ENCODE measurements at regions of chr17 and their contacts with region 1.

Region 1: GRCh38 chr17:54172096-54172984 is 349.6 kb downstream of the KIF2B start:
- DNase-seq: peak; percentile 45
- H3K4me3 ChIP-seq: no peak overlapping the region
- H3K27ac ChIP-seq: no peak overlapping the region
- H3K4me1 ChIP-seq: no peaks in the 10 kb centered on the region
- H3K27me3 ChIP-seq: no peaks in the 10 kb centered on the region
- CTCF ChIP-seq: peak; percentile 65

Region 2: GRCh38 chr17:52389632-52390031 is 1782.7 kb before region 1 on chr17:
- CTCF ChIA-PET with region 1: no interaction called
- POLR2A ChIA-PET with region 1: no interaction called
- intact Hi-C with region 1: loop called (anchors 5 kb)
- DNase-seq: no peak
- H3K4me3 ChIP-seq: no peak overlapping the region
- H3K27ac ChIP-seq: no peak overlapping the region
- H3K4me1 ChIP-seq: no peaks in the 10 kb centered on the region
- H3K27me3 ChIP-seq: no peaks in the 10 kb centered on the region
- CTCF ChIP-seq: no peak

Region 3: DNA sequence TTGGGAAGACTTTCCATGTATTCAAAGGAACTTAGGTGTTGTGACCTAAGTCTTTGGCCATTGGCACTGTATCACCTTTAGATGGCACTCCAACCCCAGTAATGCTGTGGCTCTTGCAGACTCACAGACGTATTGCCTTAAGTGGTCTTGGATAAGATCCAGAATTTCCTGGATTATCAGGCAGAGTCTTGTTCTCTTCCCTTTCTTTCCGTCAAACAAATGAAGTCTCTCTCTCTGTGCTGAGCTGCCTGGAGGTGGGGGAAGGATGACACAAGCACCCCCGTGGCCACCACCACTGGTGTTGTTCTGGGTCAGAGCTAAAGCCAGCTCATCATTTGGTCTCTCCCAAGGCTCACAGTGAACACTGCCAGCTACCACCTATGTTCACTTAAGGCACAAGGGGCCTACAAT is 1139.5 kb before region 1 on chr17:
- CTCF ChIA-PET with region 1: no interaction called
- POLR2A ChIA-PET with region 1: no interaction called
- intact Hi-C with region 1: loop called (anchors 2 kb)
- DNase-seq: peak; percentile 86
- H3K4me3 ChIP-seq: no peak overlapping the region
- H3K27ac ChIP-seq: no peak overlapping the region
- H3K4me1 ChIP-seq: no peaks in the 10 kb centered on the region
- H3K27me3 ChIP-seq: no peaks in the 10 kb centered on the region
- CTCF ChIP-seq: peak; percentile 71

Region 4: DNA sequence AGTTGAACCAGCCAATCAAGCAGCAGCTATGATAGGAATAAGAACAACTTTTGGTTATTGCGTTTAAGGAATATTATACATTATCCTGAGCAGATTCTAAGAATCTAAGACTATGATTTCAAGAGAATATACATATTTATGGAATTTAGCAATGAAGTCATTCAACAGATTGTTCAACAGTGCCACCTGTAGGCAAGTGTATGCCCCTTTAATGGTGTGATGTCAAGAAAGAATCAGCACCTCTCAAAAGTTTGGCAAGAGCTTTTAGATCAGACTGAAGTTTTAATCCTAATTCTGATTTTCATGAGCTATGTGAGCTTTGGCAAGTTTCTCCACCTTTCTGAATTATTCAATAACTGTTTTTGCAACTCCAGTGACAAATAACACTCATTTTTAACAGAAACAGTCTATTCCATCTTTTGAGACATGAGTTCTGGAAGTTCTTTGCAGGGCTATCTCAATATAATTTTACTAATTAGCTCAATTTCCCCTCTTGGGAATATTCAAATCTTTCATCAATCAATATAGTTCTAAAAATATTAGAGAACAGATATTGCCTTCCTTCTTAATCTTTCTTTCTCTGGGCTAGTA is 254.1 kb after region 1 on chr17:
- CTCF ChIA-PET with region 1: no interaction called
- POLR2A ChIA-PET with region 1: no interaction called
- intact Hi-C with region 1: loop called (anchors 1 kb)
- DNase-seq: peak; percentile 69
- H3K4me3 ChIP-seq: no peak overlapping the region
- H3K27ac ChIP-seq: no peak overlapping the region
- H3K4me1 ChIP-seq: no peaks in the 10 kb centered on the region
- H3K27me3 ChIP-seq: no peaks in the 10 kb centered on the region
- CTCF ChIP-seq: peak; percentile 78

Region 5: GRCh38 chr17:54891176-54891821 is 719.0 kb after region 1 on chr17:
- CTCF ChIA-PET with region 1: no interaction called
- POLR2A ChIA-PET with region 1: no interaction called
- intact Hi-C with region 1: loop called (anchors 10 kb)
- DNase-seq: peak; percentile 83
- H3K4me3 ChIP-seq: no peak overlapping the region
- H3K27ac ChIP-seq: no peak overlapping the region
- H3K4me1 ChIP-seq: peaks cover 3% of the 10 kb centered on the region
- H3K27me3 ChIP-seq: no peaks in the 10 kb centered on the region
- CTCF ChIP-seq: peak; percentile 64